Left ventricle myocardium inferior (tissue), 1 donor: ENCODE measurements at regions of chr4 and their contacts with region 1.

Region 1: GRCh38 chr4:15956179-15956850 is 6.7 kb downstream of the FGFBP2 start:
- DNase-seq: peak; percentile 66
- H3K4me3 ChIP-seq: no peak overlapping the region
- H3K27ac ChIP-seq: no peak overlapping the region
- H3K4me1 ChIP-seq: no peaks in the 10 kb centered on the region
- H3K27me3 ChIP-seq: peaks cover 7% of the 10 kb centered on the region
- CTCF ChIP-seq: peak; percentile 89

Region 2: DNA sequence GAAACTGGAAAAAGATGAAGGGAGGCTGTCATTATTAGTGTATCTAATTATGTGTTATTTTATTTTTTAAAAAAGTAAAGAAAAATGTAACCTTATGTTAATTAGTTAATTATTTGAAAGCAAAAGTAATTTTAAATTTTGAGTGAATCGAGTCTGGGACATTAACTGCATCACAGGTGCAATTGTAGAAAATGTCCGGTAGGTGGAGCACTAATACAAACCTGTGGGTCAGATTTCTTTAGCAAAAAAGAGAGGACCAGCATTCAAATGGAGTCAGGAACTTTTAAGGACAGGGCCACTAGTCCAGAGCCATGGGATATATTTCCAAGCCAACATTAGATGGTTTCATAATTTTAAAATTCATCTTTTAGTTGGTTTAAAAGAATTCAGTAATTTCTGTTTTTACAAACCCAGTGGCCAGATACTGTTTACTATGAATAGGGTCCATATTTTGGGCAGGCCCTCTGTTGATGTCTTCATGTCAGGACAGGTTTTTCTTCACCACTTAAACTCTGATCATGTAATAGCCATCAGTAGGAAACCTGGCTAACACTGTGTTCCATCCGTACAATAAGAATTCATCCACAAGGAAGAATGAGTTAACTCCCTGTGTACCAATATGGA is 226.3 kb before region 1 on chr4:
- intact Hi-C with region 1: loop called (anchors 5 kb)
- DNase-seq: no peak
- H3K4me3 ChIP-seq: no peak overlapping the region
- H3K27ac ChIP-seq: no peak overlapping the region
- H3K4me1 ChIP-seq: no peaks in the 10 kb centered on the region
- H3K27me3 ChIP-seq: no peaks in the 10 kb centered on the region
- CTCF ChIP-seq: peak; percentile 91

Region 3: DNA sequence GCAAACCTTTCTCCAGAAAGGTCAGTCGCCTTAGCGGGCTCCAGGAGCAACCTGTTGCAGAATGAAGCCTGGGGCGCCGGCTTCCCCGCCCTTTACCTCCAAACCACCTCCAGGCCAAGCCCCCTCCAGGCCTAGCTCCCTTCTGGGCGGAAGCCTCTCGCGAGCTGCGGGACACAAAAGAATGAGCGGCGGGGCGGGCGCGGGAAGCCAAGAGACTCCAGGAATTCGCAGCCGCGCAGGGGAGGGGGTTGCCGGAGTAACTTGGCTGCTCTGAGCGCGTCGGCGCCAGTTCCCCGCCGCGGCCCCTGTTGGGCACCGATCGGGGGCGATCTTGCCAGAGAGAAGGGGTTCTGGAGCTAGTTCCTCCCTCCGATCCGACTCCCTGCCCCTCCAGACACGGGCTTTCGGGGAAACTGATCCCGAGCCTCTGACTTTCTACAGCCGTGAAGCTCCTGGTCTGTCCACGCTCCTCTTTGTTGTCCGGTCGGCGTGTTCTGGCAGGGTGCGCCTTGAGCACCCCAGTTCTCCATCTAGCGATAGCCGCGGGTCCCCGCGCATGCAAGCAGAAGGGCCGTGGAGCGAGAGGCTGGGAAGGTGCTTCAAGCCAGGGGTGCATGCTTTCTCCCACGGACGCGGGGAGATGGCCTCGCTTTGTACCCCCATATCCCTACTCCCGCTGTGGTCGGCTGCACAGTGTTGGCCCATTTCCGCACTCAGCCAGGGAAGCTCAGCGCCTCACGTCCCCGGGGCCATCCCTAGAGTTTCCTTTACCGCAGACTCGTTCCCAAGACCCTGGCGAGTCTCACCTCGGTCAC is 126.3 kb after region 1 on chr4:
- intact Hi-C with region 1: no loop called
- DNase-seq: no peak
- H3K4me3 ChIP-seq: peak overlapping the region; percentile 73
- H3K27ac ChIP-seq: no peak overlapping the region
- H3K4me1 ChIP-seq: peaks cover 31% of the 10 kb centered on the region
- H3K27me3 ChIP-seq: peaks cover 59% of the 10 kb centered on the region
- CTCF ChIP-seq: no peak

Region 4: DNA sequence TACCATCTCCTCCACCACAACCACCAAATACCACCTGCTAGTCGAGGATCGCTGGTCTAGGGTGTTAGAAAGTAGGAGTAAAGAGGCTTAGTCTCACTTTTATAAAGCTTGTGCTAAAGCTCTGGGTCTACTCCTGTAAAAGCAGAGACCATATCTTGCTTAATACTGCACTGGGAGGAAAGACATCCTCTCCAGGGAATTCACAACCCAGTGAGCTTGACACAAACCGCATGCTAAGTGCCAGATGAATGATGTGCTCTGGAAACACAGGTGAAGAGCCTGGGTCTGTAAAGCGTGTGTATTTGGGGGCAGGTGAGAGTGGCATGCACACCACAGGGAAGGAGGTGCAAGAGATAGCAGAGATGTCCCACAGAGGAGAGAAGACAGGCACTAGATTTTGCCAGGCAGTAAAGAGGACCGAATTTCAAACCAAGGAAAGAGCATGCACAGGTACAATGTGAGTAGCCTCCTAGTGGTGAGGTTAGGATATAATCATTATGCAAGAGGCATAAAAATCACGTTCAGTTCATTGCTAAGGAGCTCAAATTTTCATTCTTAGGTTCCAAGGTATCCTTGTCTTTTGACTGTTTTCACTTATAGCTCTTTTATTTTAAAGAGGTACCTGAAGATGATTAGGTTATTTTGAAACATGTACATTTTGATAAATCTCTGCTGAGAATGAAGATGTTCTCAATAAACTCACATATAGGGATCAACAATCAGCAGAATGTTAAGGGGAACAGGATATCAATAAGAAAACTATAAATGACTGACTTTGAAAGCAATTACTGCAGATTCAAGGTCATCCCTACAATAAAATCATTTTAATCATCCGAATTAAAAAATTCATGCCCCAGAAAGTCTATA is 249.2 kb after region 1 on chr4:
- intact Hi-C with region 1: no loop called
- DNase-seq: no peak
- H3K4me3 ChIP-seq: no peak overlapping the region
- H3K27ac ChIP-seq: no peak overlapping the region
- H3K4me1 ChIP-seq: peaks cover 40% of the 10 kb centered on the region
- H3K27me3 ChIP-seq: no peaks in the 10 kb centered on the region
- CTCF ChIP-seq: peak; percentile 64